Activated CD4-positive, alpha-beta T cell treated with anti-CD3 and anti-CD28 coated beads for 36 hours (primary cell): ENCODE measurements at regions of chr2 and their contacts with region 1.

Region 1: GRCh38 chr2:202238234-202239197 is at the start of gene SUMO1:
- DNase-seq: peak; percentile 95
- ATAC-seq: peak; percentile 93
- H3K4me3 Mint-ChIP-seq: peak within 1 kb of the TSS; percentile 98
- H3K27ac Mint-ChIP-seq: peak within 1 kb of the TSS; percentile 97
- H3K4me1 Mint-ChIP-seq: peaks cover 28% of the 10 kb centered on the region
- H3K27me3 Mint-ChIP-seq: no peaks in the 10 kb centered on the region
- total RNA-seq, gene SUMO1: 132 to 164 TPM

Region 2: DNA sequence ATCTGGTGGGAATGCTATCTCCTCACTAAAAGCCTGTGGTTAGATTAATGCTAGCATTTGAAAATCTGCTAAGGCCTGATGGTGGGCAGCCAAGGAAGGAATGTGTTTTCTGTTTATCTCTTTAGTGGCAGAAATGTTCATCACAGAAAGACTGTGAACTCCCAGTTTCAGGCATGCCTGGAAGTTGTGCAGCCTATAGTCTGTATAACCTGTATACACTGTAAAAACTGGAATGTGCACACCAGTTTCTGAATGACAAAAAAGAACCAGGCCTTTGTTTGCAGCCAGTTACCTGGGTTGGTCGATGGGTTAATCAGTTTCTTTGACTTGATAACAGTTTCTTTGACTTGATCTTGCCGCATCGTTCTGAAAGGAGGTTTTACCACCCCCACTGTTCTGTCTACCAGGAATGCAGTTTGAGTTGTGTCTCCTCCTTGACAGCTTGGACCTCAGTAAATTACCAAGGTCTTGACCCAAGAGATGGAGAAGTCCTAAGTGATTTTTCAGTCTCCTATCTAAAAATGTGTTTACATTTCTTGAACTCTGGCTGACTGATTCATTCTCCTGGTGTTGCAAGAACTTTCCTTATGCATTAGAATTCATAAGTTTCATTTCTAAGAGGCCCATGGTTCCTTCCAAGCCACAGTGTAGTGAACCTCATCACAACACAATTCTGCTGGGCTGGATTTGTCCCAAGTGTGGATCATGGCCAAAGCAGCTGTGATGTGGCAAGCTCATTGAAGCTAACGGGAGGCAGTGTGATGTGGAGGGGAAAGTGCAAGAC is 103.2 kb before region 1 on chr2:
- CTCF ChIA-PET with region 1: no interaction called
- POLR2A ChIA-PET with region 1: no interaction called
- intact Hi-C with region 1: no loop called
- DNase-seq: no peak
- ATAC-seq: no peak
- H3K4me3 Mint-ChIP-seq: no peak overlapping the region
- H3K27ac Mint-ChIP-seq: no peak overlapping the region
- H3K4me1 Mint-ChIP-seq: no peaks in the 10 kb centered on the region
- H3K27me3 Mint-ChIP-seq: no peaks in the 10 kb centered on the region

Region 3: GRCh38 chr2:202278944-202279343 is 40.4 kb after region 1 on chr2:
- CTCF ChIA-PET with region 1: no interaction called
- POLR2A ChIA-PET with region 1: no interaction called
- intact Hi-C with region 1: loop called (anchors 5 kb)
- DNase-seq: no peak
- ATAC-seq: no peak
- H3K4me3 Mint-ChIP-seq: no peak overlapping the region
- H3K27ac Mint-ChIP-seq: peak overlapping the region; percentile 84
- H3K4me1 Mint-ChIP-seq: peaks cover 46% of the 10 kb centered on the region
- H3K27me3 Mint-ChIP-seq: no peaks in the 10 kb centered on the region

Region 4: DNA sequence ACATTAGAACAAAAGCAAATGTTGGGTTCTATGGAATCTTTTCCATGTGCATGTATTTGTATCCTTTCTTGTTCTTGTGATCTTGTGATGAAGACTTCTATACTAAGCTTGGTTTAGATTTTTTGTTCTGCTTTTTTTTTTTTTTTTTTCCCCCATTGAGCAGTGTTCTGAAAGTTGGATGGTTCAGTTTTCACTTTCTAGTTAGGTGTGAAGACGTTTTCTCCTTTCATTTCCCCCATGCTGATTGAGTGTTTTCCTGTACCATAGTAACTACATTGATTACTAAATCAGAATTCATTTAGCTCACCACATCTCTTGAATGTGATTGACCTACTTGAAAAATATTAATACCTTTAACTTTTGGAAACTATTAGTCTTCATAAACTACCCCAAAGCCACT is 61.2 kb after region 1 on chr2:
- CTCF ChIA-PET with region 1: interaction called, 3 read pairs
- POLR2A ChIA-PET with region 1: no interaction called
- intact Hi-C with region 1: loop called (anchors 5 kb)
- DNase-seq: no peak
- ATAC-seq: peak; percentile 83
- H3K4me3 Mint-ChIP-seq: no peak overlapping the region
- H3K27ac Mint-ChIP-seq: peak overlapping the region; percentile 86
- H3K4me1 Mint-ChIP-seq: peaks cover 44% of the 10 kb centered on the region
- H3K27me3 Mint-ChIP-seq: no peaks in the 10 kb centered on the region

Region 5: GRCh38 chr2:202514732-202515131 is 276.2 kb after region 1 on chr2:
- CTCF ChIA-PET with region 1: no interaction called
- POLR2A ChIA-PET with region 1: no interaction called
- intact Hi-C with region 1: no loop called
- DNase-seq: no peak
- ATAC-seq: no peak
- H3K4me3 Mint-ChIP-seq: no peak overlapping the region
- H3K27ac Mint-ChIP-seq: no peak overlapping the region
- H3K4me1 Mint-ChIP-seq: no peaks in the 10 kb centered on the region
- H3K27me3 Mint-ChIP-seq: no peaks in the 10 kb centered on the region

Region 6: DNA sequence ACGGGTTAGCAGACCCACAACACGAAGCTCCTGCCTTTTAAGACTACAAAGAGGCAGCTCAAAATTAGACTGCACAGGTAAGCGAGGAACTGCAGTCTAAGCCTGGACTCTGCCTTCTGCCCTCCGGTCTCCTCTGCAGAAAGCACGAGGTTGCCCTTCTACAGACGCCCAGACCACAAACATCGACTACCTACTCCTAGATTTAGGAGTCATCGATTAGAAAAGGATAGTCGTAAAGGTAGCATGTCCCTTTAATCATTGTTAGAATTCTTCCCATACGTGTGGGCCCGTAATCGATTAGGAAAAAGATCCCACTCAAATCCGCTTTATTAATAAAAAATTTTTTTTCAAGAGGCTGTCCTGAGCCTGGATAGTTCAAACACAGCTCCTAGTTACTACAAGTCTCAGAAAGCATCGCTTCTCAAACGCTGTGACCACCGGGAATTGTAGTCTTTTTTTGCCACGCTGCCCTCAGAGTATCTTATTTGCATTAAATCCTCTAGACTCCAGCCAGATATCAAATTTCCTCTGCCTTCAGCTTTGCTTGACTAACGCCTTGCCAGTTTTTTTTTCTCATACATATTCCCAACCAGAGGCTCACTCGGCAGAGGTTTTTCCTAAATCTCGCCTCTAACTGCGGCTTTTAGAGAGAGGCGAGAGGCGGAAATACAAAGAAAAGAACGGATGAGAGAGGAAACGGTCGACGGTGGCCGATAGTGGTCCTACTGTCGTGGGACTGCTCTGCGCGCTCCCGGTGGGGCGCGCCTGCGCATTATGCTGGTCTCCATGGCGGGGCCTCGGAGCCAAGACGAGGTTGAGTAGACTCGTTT is 673.2 kb after region 1 on chr2 and contains the starts of genes CARF and WDR12:
- CTCF ChIA-PET with region 1: no interaction called
- POLR2A ChIA-PET with region 1: no interaction called
- intact Hi-C with region 1: loop called in 1 of 2 experiments (anchors 1 kb)
- DNase-seq: peak; percentile 96
- ATAC-seq: peak; percentile 84
- H3K4me3 Mint-ChIP-seq: peak within 1 kb of the TSS; percentile 84
- H3K27ac Mint-ChIP-seq: peak within 1 kb of the TSS; percentile 95
- H3K4me1 Mint-ChIP-seq: peaks cover 30% of the 10 kb centered on the region
- H3K27me3 Mint-ChIP-seq: no peaks in the 10 kb centered on the region
- total RNA-seq, gene CARF: 6.2 to 9.0 TPM
- total RNA-seq, gene WDR12: 92.5 to 129 TPM